ENCODE measurements at regions of chr1 and their contacts with region 1.

Region 1: DNA sequence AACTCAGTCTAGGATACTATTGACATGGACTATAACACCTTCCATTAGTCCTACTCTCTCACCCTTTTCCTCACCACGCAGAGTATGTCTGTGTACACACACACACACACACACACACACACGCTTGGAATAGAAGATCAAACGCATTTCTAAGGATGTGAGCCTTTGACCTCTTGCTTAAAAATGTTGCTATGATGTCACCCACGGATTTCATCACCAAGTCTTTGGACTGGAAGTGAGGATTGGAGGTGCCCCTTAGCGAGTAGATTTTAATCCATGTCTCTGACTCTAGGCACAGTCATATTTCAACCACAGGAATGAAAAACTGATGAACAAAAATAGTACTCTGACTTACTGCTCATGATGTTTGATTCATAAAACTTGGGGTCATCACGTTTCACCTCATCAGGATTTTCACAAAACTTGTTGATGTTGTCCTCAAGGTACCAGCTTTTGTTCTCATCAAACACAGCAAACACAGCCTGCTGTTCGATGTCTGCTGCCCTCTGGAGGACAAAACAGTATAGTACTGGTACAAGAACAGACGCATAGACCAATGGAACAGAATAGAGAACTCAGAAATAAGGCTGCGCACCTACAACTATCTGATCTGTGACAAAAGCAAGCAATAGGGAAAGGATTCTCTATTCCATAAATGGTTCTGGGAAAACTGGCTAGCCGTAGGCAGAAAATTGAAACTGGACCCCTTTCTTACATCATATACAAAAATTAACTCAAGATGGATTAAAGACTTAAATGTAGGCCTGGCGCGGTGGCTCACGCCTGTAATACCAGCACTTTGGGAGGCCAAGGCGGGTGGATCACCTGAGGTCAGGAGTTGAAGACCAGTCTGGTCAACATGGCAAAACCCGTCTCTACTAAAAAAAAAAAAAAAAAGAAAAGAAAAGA is 39.9 kb downstream of the F5 start:
- DNase-seq: peak; percentile 28 to 82 (median 40)
- ATAC-seq: peak; percentile 91
- H3K4me3 ChIP-seq: no peak overlapping the region
- H3K27ac ChIP-seq: no peak overlapping the region
- H3K4me1 ChIP-seq: no peaks in the 10 kb centered on the region; a peak in 2 of 5 replicates
- H3K27me3 ChIP-seq: 0 out of 5 replicates have a peak, but pooled peaks cover 0 to 2% of the 10 kb centered on the region in 2 experiments
- CTCF ChIP-seq: peak; percentile 72 to 83 (median 76)
- EP300 ChIP-seq: no peak
- POLR2A ChIP-seq: no peak
- RAD21 ChIP-seq: peak; percentile 96 to 97

Region 2: DNA sequence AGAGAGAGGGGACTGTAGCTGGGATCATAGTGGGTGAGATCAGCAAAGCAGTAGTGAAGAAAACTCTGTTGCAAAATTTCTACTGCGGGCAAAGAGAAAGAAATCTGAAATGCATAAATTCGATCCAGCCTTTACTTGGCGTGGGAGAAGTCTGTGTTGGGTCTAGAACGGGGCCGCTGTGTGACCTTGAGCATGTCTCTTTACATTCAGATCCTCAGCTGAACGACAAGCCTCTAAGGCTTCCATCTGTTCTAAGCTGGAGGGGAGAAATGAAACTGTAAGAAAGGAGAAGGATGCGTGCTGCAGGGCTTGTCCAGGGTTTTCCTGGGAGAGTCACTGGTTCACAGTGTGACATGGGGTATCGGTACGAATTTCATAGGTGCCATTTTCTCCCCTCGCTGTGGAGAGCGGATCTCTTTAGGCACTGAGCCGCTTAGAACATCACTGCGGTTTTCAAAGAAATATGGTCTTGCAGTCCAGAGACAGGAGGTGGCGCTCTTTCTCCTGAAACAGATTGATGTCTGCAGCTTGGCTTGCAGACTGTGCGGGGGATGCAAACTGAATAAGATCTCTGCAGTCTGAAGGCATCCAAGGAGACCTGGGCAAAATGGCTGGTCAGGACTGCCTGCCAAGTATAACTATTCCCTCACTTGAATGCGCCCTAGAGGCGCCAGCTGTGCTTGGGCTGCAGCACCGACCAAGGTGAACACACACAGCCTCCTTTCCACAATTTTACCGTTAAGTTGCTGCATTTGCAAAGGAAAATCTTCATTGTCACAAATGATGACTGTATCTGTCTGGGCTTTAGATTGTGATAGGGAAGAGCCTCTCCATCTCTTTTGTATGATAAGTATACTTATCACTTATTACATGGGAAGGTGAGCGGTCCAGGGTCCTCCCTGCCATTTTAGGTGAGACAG is 1106.6 kb before region 1 on chr1:
- CTCF ChIA-PET with region 1: no interaction called
- POLR2A ChIA-PET with region 1: no interaction called
- in situ Hi-C with region 1: no loop called
- intact Hi-C with region 1: loop called (anchors 10 kb)
- DNase-seq: peak; percentile 61 to 90 (median 69)
- ATAC-seq: peak; percentile 97
- H3K4me3 ChIP-seq: no peak overlapping the region
- H3K27ac ChIP-seq: no peak overlapping the region
- H3K4me1 ChIP-seq: no peaks in the 10 kb centered on the region; a peak in 1 of 5 replicates
- H3K27me3 ChIP-seq: peaks cover 1 to 32% of the 10 kb centered on the region in 2 experiments; a peak in 3 of 5 replicates
- CTCF ChIP-seq: peak; percentile 90 to 96 (median 94)
- EP300 ChIP-seq: no peak
- POLR2A ChIP-seq: no peak
- RAD21 ChIP-seq: peak; percentile 94 to 99

Region 3: GRCh38 chr1:168689726-168690602 is 856.4 kb before region 1 on chr1:
- CTCF ChIA-PET with region 1: no interaction called
- POLR2A ChIA-PET with region 1: no interaction called
- in situ Hi-C with region 1: no loop called
- intact Hi-C with region 1: no loop called
- DNase-seq: no peak
- ATAC-seq: no peak
- H3K4me3 ChIP-seq: no peak overlapping the region
- H3K27ac ChIP-seq: no peak overlapping the region
- H3K4me1 ChIP-seq: no peaks in the 10 kb centered on the region
- H3K27me3 ChIP-seq: no peaks in the 10 kb centered on the region
- CTCF ChIP-seq: no peak
- EP300 ChIP-seq: no peak
- POLR2A ChIP-seq: no peak
- RAD21 ChIP-seq: no peak

Region 4: GRCh38 chr1:169106095-169106920 is 440.0 kb before region 1 on chr1 and contains the start of gene ATP1B1:
- CTCF ChIA-PET with region 1: no interaction called
- POLR2A ChIA-PET with region 1: no interaction called
- in situ Hi-C with region 1: no loop called
- intact Hi-C with region 1: loop called (anchors 10 kb)
- DNase-seq: peak; percentile 91 to 98 (median 96)
- ATAC-seq: peak; percentile 98
- H3K4me3 ChIP-seq: peak within 1 kb of the TSS; percentile 66
- H3K27ac ChIP-seq: no peak within 1 kb of the TSS
- H3K4me1 ChIP-seq: peaks cover 3 to 18% of the 10 kb centered on the region in 2 experiments; a peak in 4 of 5 replicates
- H3K27me3 ChIP-seq: peaks cover 15 to 40% of the 10 kb centered on the region in 2 experiments
- CTCF ChIP-seq: peak; percentile 26 to 55 (median 46); a peak in 3 of 6 replicates
- EP300 ChIP-seq: no peak
- POLR2A ChIP-seq: peak; percentile 73
- RAD21 ChIP-seq: peak; percentile 12 to 13; a peak in 1 of 4 replicates
- polyA plus RNA-seq, gene ATP1B1: 0.76 to 1.1 TPM

Region 5: GRCh38 chr1:169367486-169368405 is 178.6 kb before region 1 on chr1 and contains the starts of genes BLZF1 and NME7:
- CTCF ChIA-PET with region 1: no interaction called
- POLR2A ChIA-PET with region 1: no interaction called
- in situ Hi-C with region 1: no loop called
- intact Hi-C with region 1: loop called (anchors 5 kb)
- DNase-seq: peak; percentile 95 to 99 (median 96)
- ATAC-seq: peak; percentile 98
- H3K4me3 ChIP-seq: peak within 1 kb of the TSS; percentile 71
- H3K27ac ChIP-seq: peak within 1 kb of the TSS; percentile 84
- H3K4me1 ChIP-seq: peaks cover 0 to 11% of the 10 kb centered on the region in 2 experiments; a peak in 3 of 5 replicates
- H3K27me3 ChIP-seq: no peaks in the 10 kb centered on the region
- CTCF ChIP-seq: no peak
- EP300 ChIP-seq: 0 out of 2 replicates have a peak, but pooled peaks have one; percentile 35
- POLR2A ChIP-seq: peak; percentile 83
- RAD21 ChIP-seq: no peak; a peak in 1 of 4 replicates
- polyA plus RNA-seq, gene BLZF1: 25.3 to 32.8 TPM
- polyA plus RNA-seq, gene NME7: 40.3 to 43.2 TPM

Region 6: DNA sequence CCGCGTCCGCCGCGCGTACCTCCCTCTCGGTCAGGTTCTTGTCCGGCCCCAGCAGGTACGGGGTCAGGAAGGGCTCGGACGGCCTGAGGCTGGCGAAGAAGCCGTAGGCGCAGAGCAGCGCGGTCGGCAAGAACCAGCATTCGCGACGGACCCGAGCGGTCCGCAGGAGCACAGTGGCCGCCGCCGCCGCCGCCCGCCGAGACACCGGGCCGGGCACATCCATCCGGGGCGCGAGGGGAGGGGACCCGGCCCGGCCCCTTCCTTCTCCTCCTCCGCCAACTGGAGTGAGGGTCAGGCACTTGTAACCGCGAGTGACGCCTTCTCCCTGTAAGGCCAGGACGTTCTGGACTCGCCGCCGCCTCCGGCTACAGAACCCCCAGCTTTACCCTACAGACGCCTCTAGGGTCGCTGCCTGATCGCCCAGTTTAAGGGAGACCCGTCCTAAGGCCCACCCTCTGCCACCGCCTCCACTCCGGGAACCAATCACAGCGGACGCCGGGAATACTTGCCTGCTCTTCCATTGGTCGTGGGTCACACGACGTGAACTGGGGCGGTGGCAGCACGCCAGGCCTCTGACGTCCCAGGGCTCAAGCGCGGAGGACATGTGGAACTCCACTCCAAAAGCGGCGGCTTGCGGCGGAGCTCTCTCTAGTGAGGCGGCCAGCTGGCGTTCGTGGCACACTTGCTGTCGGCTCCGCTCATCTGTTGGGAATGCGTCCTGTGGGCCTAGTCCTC is 60.6 kb before region 1 on chr1 and contains the start of gene SLC19A2:
- CTCF ChIA-PET with region 1: interaction called, 3 read pairs
- POLR2A ChIA-PET with region 1: no interaction called
- in situ Hi-C with region 1: no loop called
- intact Hi-C with region 1: loop called (anchors 5 kb)
- DNase-seq: peak; percentile 100
- ATAC-seq: peak; percentile 95
- H3K4me3 ChIP-seq: peak within 1 kb of the TSS; percentile 79
- H3K27ac ChIP-seq: peak within 1 kb of the TSS; percentile 89
- H3K4me1 ChIP-seq: peaks cover 13 to 23% of the 10 kb centered on the region in 2 experiments; a peak in 4 of 5 replicates
- H3K27me3 ChIP-seq: no peaks in the 10 kb centered on the region
- CTCF ChIP-seq: peak; percentile 58 to 72 (median 65)
- EP300 ChIP-seq: no peak
- POLR2A ChIP-seq: peak; percentile 96
- RAD21 ChIP-seq: peak; percentile 37 to 44
- polyA plus RNA-seq, gene SLC19A2: 7.4 to 8.9 TPM

Region 7: GRCh38 chr1:169572187-169572586 is 25.8 kb after region 1 on chr1:
- CTCF ChIA-PET with region 1: no interaction called
- POLR2A ChIA-PET with region 1: no interaction called
- in situ Hi-C with region 1: no loop called
- intact Hi-C with region 1: no loop called
- DNase-seq: no peak
- ATAC-seq: no peak
- H3K4me3 ChIP-seq: no peak overlapping the region
- H3K27ac ChIP-seq: no peak overlapping the region
- H3K4me1 ChIP-seq: no peaks in the 10 kb centered on the region
- H3K27me3 ChIP-seq: peaks cover 2 to 4% of the 10 kb centered on the region in 2 experiments; a peak in 3 of 5 replicates
- CTCF ChIP-seq: no peak
- EP300 ChIP-seq: no peak
- POLR2A ChIP-seq: no peak
- RAD21 ChIP-seq: no peak

Region 8: GRCh38 chr1:169809370-169810095 is 263.2 kb after region 1 on chr1:
- CTCF ChIA-PET with region 1: interaction called, 7 read pairs
- POLR2A ChIA-PET with region 1: no interaction called
- in situ Hi-C with region 1: loop called (anchors 10 kb)
- intact Hi-C with region 1: loop called (anchors 1 kb)
- DNase-seq: peak; percentile 17 to 52 (median 43)
- ATAC-seq: peak; percentile 79
- H3K4me3 ChIP-seq: no peak overlapping the region
- H3K27ac ChIP-seq: no peak overlapping the region
- H3K4me1 ChIP-seq: no peaks in the 10 kb centered on the region
- H3K27me3 ChIP-seq: no peaks in the 10 kb centered on the region
- CTCF ChIP-seq: peak; percentile 29 to 72 (median 45); a peak in 4 of 6 replicates
- EP300 ChIP-seq: no peak
- POLR2A ChIP-seq: no peak
- RAD21 ChIP-seq: peak; percentile 62 to 67

Region 9: GRCh38 chr1:170929835-170930554 is 1383.7 kb after region 1 on chr1:
- CTCF ChIA-PET with region 1: no interaction called
- POLR2A ChIA-PET with region 1: no interaction called
- in situ Hi-C with region 1: no loop called
- intact Hi-C with region 1: loop called (anchors 5 kb)
- DNase-seq: peak; percentile 41 to 58 (median 51)
- ATAC-seq: peak; percentile 91
- H3K4me3 ChIP-seq: no peak overlapping the region
- H3K27ac ChIP-seq: no peak overlapping the region
- H3K4me1 ChIP-seq: no peaks in the 10 kb centered on the region
- H3K27me3 ChIP-seq: no peaks in the 10 kb centered on the region
- CTCF ChIP-seq: peak; percentile 57 to 65 (median 65)
- EP300 ChIP-seq: no peak
- POLR2A ChIP-seq: no peak
- RAD21 ChIP-seq: peak; percentile 64 to 73